ENCODE measurements at regions of chr5 and their contacts with region 1.

Region 1: DNA sequence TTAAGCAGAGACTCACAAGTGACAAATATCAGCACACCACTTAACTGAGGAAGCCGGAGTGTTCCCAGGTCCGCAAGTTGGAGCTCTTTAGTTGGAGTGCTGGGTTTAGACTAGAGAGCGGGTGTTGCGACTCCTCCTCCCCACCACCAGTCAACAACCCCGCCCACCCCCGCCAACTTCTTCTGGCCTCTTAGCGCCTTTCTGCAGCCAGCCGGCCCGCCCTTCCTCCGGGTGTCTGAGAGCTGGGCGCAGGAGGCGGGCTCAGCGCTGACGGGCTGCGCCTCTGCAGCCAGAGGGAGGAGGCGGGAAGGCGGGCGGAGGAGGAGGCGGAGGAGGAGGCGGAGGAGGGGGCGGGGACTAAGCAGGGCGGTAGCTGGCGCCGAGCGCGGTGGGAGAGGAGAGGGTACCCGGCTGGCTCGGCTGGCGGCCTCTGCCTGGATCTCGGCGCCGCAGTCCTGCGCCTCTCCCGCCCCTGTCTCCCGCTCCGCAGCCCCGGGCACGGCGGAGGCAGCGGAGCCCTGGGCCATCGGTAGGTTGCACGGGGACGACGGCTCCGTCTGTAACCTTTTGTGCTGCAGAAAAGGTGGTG is at the start of gene MACIR:
- DNase-seq: peak; percentile 93
- ATAC-seq: peak; percentile 98
- H3K4me3 Mint-ChIP-seq: peak within 1 kb of the TSS; percentile 87
- H3K27ac Mint-ChIP-seq: peak within 1 kb of the TSS; percentile 72
- H3K4me1 Mint-ChIP-seq: peaks cover 14% of the 10 kb centered on the region
- H3K27me3 Mint-ChIP-seq: peaks cover 40% of the 10 kb centered on the region
- total RNA-seq, gene MACIR: 5.4 to 5.6 TPM

Region 2: GRCh38 chr5:103119765-103120606 is 138.5 kb before region 1 on chr5 and contains the starts of genes GIN1 and PPIP5K2:
- POLR2A ChIA-PET with region 1: interaction called, 21 read pairs
- DNase-seq: peak; percentile 96
- ATAC-seq: peak; percentile 91
- H3K4me3 Mint-ChIP-seq: peak within 1 kb of the TSS; percentile 89
- H3K27ac Mint-ChIP-seq: peak within 1 kb of the TSS; percentile 98
- H3K4me1 Mint-ChIP-seq: peaks cover 24% of the 10 kb centered on the region
- H3K27me3 Mint-ChIP-seq: no peaks in the 10 kb centered on the region
- total RNA-seq, gene GIN1: 10.3 to 10.7 TPM
- total RNA-seq, gene PPIP5K2: 63.0 to 67.1 TPM